Left cardiac atrium (tissue), 4 donors: ENCODE measurements at regions of chr10 and their contacts with region 1.

Region 1: GRCh38 chr10:120735773-120736371 is 115.3 kb upstream of the WDR11 start:
- DNase-seq: no peak
- ATAC-seq: peak in 1 of 2 donors; percentile 35

Region 2: DNA sequence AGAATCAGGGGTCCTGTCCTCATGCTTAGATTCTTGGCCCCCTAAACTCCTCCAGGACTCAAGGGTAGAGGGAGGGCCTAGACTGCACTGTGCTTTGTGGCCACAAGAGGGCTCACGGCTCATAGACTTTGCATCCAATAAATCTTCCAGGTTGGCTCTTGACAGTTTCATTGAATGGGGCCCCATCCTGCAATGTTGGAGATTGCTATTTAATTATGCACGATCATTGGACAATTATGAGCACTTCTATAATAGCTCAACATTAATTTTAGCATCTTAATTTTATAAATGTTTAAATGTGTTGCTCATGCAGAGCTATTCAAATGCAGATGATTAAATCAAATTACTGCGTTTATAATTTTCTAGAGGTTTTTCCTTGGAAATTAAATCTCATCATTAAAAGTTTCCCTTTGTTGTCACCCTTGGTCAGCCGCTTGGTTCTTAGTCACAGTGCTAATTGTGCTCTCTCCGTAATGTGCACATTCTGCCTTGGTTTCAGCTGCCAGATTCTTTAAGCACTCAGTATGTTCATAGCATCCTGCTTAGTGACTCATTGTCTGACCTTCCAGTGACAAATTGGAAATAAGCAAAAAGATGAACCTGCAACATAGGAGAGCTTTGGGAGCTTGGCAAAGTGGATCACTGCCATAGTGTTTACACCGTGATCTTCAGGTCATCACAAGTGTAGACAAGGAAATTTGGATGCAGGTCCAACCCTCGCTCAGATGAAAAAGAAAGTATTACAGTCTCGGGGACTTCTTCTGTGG is 312.3 kb before region 1 on chr10:
- intact Hi-C with region 1: loop called in 1 of 2 experiments (anchors 10 kb)
- DNase-seq: peak; percentile 22
- ATAC-seq: peak in 1 of 2 donors; percentile 59

Region 3: GRCh38 chr10:120883071-120883470 is 147.2 kb after region 1 on chr10:
- intact Hi-C with region 1: no loop called
- DNase-seq: no peak
- ATAC-seq: no peak

Region 4: GRCh38 chr10:121205625-121206024 is 469.8 kb after region 1 on chr10:
- intact Hi-C with region 1: no loop called
- DNase-seq: no peak
- ATAC-seq: no peak